ENCODE measurements at regions of chr3 and their contacts with region 1.

Region 1: GRCh38 chr3:139302084-139302800 is 41.6 kb upstream of the MRPS22 start:
- DNase-seq: peak; percentile 89
- ATAC-seq: peak; percentile 74
- H3K4me3 ChIP-seq: peak overlapping the region in 1 of 2 experiments; percentile 21; a peak in 1 of 4 replicates
- H3K27ac ChIP-seq: peak overlapping the region; percentile 97
- H3K4me1 ChIP-seq: peaks cover 81 to 96% of the 10 kb centered on the region in 2 experiments
- H3K27me3 ChIP-seq: no peaks in the 10 kb centered on the region
- CTCF ChIP-seq: no peak
- POLR2A ChIP-seq: peak; percentile 21
- RAD21 ChIP-seq: no peak

Region 2: GRCh38 chr3:139319428-139320402 is 17.5 kb after region 1 on chr3:
- CTCF ChIA-PET with region 1: interaction called, 36 read pairs
- POLR2A ChIA-PET with region 1: interaction called, 198 read pairs
- RAD21 ChIA-PET with region 1: interaction called in 1 of 2 experiments, 3 read pairs
- intact Hi-C with region 1: no loop called
- DNase-seq: no peak
- ATAC-seq: peak; percentile 65
- H3K4me3 ChIP-seq: no peak overlapping the region
- H3K27ac ChIP-seq: peak overlapping the region; percentile 94
- H3K4me1 ChIP-seq: peaks cover 52 to 72% of the 10 kb centered on the region in 2 experiments
- H3K27me3 ChIP-seq: no peaks in the 10 kb centered on the region
- CTCF ChIP-seq: peak in 2 of 3 experiments; percentile 82 to 90; a peak in 4 of 6 replicates
- POLR2A ChIP-seq: no peak
- RAD21 ChIP-seq: no peak

Measured in HCT116 (cell line).